Common myeloid progenitor, CD34-positive (primary cell): ENCODE measurements at regions of chr4 and their contacts with region 1.

Region 1: DNA sequence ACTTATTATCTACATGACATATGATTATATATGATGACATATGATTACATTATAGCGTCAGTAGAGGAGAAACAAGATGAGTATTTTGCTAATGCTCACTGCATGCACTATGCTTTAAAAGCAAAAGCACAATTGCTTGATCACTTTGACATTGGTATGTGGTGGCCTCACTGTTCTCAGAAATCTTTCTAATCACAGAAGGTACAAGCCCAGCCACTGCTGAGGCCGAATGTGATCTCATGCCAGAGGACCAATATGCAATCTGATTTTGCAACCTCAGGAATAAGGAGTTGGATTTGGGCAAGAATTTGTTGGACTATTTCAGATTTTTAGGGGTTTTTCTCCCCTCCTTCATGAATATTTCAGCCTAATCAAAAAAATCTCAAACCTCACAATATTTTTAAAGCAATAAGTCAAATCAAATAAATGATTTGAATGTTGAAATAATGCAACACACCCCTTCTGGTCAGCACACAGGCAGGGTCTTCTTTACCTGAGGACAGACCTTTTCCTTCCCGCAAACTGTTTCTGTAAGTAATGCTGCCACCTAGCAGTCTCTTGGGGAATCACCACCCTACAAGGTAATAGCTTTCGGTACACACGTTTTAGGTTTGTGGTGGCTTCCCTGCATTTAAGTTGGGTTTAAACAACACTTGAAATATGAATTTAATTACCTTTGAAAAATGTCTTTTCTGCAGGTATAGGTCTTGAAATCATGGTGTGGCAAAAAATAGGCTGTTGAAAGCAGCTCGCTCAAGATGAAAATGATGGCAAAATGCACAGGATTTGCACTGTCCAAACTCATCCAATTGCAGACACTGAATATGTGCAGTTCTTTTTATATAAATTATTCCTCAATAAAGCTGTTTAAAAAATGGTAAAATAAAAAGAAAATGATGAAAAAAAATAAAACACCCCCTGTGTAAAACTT is 4.8 kb upstream of the CXCL13 start:
- DNase-seq: peak; percentile 36 to 58 (median 50)
- H3K4me3 ChIP-seq: no peak overlapping the region
- H3K27ac ChIP-seq: no peak overlapping the region
- H3K4me1 ChIP-seq: no peaks in the 10 kb centered on the region
- H3K27me3 ChIP-seq: peaks cover 0 to 2% (median 0%) of the 10 kb centered on the region in 5 experiments

Region 2: GRCh38 chr4:77385124-77385969 is 215.4 kb before region 1 on chr4:
- CTCF ChIA-PET with region 1: interaction called, 31 read pairs
- POLR2A ChIA-PET with region 1: no interaction called
- DNase-seq: peak; percentile 63 to 78 (median 71)
- H3K4me3 ChIP-seq: no peak overlapping the region
- H3K27ac ChIP-seq: no peak overlapping the region
- H3K4me1 ChIP-seq: no peaks in the 10 kb centered on the region
- H3K27me3 ChIP-seq: peaks cover 0 to 2% (median 0%) of the 10 kb centered on the region in 5 experiments

Region 3: DNA sequence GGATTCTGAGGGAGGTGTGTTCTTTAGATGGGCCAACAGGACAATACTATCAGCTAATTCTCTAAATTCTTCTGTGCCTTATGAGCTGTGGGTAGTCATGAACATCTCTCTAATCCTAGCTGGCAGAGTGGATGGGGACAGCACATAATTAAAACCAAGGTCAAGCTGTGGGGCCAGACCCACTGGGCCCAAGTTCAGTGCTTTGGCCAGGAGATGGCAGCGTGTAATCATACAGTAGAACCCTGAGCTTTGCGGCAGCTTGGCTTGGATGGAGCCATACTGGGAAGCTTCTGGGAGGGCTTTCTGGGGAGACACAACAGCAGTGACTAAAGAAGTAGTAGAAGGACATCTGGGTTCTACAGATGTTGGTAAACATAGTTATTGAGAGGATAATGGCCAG is 135.5 kb before region 1 on chr4:
- CTCF ChIA-PET with region 1: interaction called, 239 read pairs
- POLR2A ChIA-PET with region 1: no interaction called
- DNase-seq: peak; percentile 40 to 59 (median 44)
- H3K4me3 ChIP-seq: no peak overlapping the region
- H3K27ac ChIP-seq: no peak overlapping the region
- H3K4me1 ChIP-seq: no peaks in the 10 kb centered on the region
- H3K27me3 ChIP-seq: no peaks in the 10 kb centered on the region

Region 4: GRCh38 chr4:77613267-77613666 is 12.5 kb after region 1 on chr4:
- CTCF ChIA-PET with region 1: interaction called, 17 read pairs
- POLR2A ChIA-PET with region 1: no interaction called
- DNase-seq: no peak
- H3K4me3 ChIP-seq: no peak overlapping the region
- H3K27ac ChIP-seq: no peak overlapping the region
- H3K4me1 ChIP-seq: no peaks in the 10 kb centered on the region
- H3K27me3 ChIP-seq: no peaks in the 10 kb centered on the region